ENCODE measurements at regions of chr9 and their contacts with region 1.

Region 1: GRCh38 chr9:96854073-96854876 is at the start of gene ZNF782:
- DNase-seq: peak; percentile 92
- H3K4me3 ChIP-seq: peak within 1 kb of the TSS; percentile 90
- H3K27ac ChIP-seq: peak within 1 kb of the TSS; percentile 24
- H3K4me1 ChIP-seq: peaks cover 18% of the 10 kb centered on the region
- CTCF ChIP-seq: no peak
- total RNA-seq, gene ZNF782: 8.6 and 14.3 TPM in 2 replicates

Region 2: GRCh38 chr9:96762568-96762967 is 91.7 kb before region 1 on chr9:
- CTCF ChIA-PET with region 1: no interaction called
- POLR2A ChIA-PET with region 1: no interaction called
- intact Hi-C with region 1: no loop called
- DNase-seq: no peak
- H3K4me3 ChIP-seq: no peak overlapping the region
- H3K27ac ChIP-seq: no peak overlapping the region
- H3K4me1 ChIP-seq: no peaks in the 10 kb centered on the region
- CTCF ChIP-seq: no peak

Region 3: DNA sequence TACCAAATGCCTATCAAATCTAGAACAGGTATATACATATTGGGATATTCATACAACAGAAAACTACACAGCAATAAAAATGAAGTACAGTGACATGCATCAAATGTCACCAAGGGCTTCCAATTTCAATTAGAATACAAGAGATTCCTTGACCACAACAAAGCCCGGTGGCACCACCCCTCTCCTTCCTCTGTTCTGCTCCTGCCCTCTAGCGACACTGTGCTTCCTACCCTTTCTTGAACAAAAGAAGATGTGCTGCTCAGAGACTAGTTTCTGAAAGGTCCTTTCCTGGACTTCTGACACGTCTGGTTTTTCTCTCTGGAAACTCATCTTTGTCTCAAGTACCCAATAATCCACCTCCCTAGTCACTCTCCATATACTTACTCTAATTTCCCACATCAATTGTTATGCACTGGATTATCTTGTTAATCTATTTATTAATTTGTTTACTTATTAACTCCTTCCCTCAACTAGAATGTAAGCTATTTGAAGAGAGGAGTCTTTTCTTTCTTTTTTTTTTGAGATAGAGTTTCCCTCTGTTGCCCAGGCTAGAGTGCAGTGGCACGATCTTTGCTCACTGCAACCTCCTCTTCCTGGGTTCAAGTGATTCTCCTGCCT is 255.0 kb after region 1 on chr9:
- CTCF ChIA-PET with region 1: no interaction called
- POLR2A ChIA-PET with region 1: no interaction called
- intact Hi-C with region 1: loop called (anchors 2 kb)
- DNase-seq: peak; percentile 31
- H3K4me3 ChIP-seq: no peak overlapping the region
- H3K27ac ChIP-seq: no peak overlapping the region
- H3K4me1 ChIP-seq: no peaks in the 10 kb centered on the region
- CTCF ChIP-seq: peak; percentile 65

Region 4: GRCh38 chr9:97372580-97372979 is 518.3 kb after region 1 on chr9:
- CTCF ChIA-PET with region 1: no interaction called
- POLR2A ChIA-PET with region 1: no interaction called
- intact Hi-C with region 1: loop called (anchors 1 kb)
- DNase-seq: no peak
- H3K4me3 ChIP-seq: no peak overlapping the region
- H3K27ac ChIP-seq: no peak overlapping the region
- H3K4me1 ChIP-seq: no peaks in the 10 kb centered on the region
- CTCF ChIP-seq: no peak

Region 5: DNA sequence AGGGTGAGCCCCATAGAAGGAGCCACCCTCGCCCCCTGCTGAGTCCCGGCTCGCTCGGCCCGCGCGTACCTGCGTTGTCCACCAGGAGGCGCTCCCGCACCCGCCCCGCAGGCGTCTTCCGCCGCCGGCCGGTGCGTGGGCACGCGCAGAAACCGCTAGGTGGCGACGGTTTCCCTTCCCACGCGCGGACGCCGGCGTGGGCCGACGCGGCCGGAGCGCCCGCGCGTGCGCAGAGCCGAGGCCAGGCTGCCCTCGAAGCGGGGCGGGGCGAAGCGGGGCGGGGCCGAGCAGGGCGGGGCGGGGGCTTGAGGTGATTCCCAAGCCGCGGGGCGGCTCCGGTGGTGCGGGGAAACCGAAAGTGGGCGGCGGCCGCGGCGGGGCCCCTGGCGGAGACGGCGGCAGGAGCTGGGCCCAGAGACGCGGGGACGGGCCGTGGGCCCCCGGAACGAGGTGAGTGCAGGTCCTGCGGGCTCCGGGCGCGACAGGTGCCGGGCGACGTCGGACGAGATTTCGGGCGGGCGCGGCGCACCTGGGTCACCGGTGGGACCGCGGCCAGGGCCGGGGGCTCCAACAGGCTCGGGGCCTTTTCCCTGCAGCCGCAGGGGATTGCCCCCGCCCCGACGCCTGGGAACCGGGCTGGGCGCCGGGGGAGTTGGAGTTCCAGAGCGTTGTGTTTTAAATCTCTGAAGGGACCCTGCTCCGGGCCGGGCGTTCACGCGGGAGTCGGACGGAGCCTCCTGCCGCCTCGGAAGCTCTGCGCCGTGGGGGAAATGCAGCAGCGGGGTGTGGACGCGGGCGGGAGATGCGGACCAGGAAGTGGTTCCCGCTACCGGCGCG is 557.7 kb after region 1 on chr9 and contains the start of gene TDRD7:
- CTCF ChIA-PET with region 1: no interaction called
- POLR2A ChIA-PET with region 1: no interaction called
- intact Hi-C with region 1: loop called (anchors 10 kb)
- DNase-seq: peak; percentile 88
- H3K4me3 ChIP-seq: peak within 1 kb of the TSS; percentile 91
- H3K27ac ChIP-seq: no peak within 1 kb of the TSS
- H3K4me1 ChIP-seq: peaks cover 20% of the 10 kb centered on the region
- CTCF ChIP-seq: peak; percentile 88
- total RNA-seq, gene TDRD7: 4.0 and 5.5 TPM in 2 replicates

Region 6: GRCh38 chr9:97615439-97616072 is 761.3 kb after region 1 on chr9:
- CTCF ChIA-PET with region 1: no interaction called
- POLR2A ChIA-PET with region 1: no interaction called
- intact Hi-C with region 1: loop called (anchors 2 kb)
- DNase-seq: peak; percentile 65
- H3K4me3 ChIP-seq: no peak overlapping the region
- H3K27ac ChIP-seq: no peak overlapping the region
- H3K4me1 ChIP-seq: peaks cover 11% of the 10 kb centered on the region
- CTCF ChIP-seq: peak; percentile 93

Measured in OCI-LY7 (cell line).